ENCODE measurements at regions of chr13 and their contacts with region 1.

Region 1: DNA sequence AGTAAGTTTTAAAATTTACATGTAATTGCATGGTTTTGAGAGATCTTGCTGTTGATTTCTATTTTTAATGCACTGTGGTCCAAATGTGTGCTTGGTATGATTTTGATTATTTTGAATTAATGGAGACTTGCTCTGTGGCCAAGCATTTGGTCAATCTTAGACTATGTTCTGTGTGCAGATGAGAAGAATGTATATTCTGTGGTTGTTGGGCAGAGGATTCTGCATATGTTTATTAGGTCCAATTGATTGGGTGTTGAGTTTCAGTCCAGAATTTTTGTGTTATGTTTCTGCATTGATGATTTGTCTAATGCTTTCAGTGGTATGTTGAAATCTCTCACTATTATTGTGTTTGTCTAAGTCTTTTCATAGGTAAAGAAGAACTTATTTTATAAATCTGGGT is 82.3 kb downstream of the TDRD3 start:
- DNase-seq: no peak
- ATAC-seq: no peak
- H3K4me3 ChIP-seq: no peak overlapping the region
- H3K4me3 Mint-ChIP-seq: no peak overlapping the region
- H3K27ac ChIP-seq: no peak overlapping the region
- H3K27ac Mint-ChIP-seq: no peak overlapping the region
- H3K4me1 ChIP-seq: no peaks in the 10 kb centered on the region
- H3K4me1 Mint-ChIP-seq: peaks cover 0 to 9% (median 0%) of the 10 kb centered on the region in 7 donors
- H3K27me3 ChIP-seq: no peaks in the 10 kb centered on the region
- H3K27me3 Mint-ChIP-seq: no peaks in the 10 kb centered on the region

Region 2: GRCh38 chr13:60417734-60418133 is 61.5 kb before region 1 on chr13:
- CTCF ChIA-PET with region 1: no interaction called
- POLR2A ChIA-PET with region 1: no interaction called
- intact Hi-C with region 1: loop called in 1 of 2 experiments (anchors 10 kb)
- DNase-seq: no peak
- ATAC-seq: no peak
- H3K4me3 ChIP-seq: no peak overlapping the region
- H3K4me3 Mint-ChIP-seq: no peak overlapping the region
- H3K27ac ChIP-seq: no peak overlapping the region
- H3K27ac Mint-ChIP-seq: peak overlapping the region in 1 of 9 donors; percentile 43
- H3K4me1 ChIP-seq: no peaks in the 10 kb centered on the region
- H3K4me1 Mint-ChIP-seq: peaks cover 3 to 45% (median 20%) of the 10 kb centered on the region in 7 donors
- H3K27me3 ChIP-seq: no peaks in the 10 kb centered on the region
- H3K27me3 Mint-ChIP-seq: no peaks in the 10 kb centered on the region

Region 3: DNA sequence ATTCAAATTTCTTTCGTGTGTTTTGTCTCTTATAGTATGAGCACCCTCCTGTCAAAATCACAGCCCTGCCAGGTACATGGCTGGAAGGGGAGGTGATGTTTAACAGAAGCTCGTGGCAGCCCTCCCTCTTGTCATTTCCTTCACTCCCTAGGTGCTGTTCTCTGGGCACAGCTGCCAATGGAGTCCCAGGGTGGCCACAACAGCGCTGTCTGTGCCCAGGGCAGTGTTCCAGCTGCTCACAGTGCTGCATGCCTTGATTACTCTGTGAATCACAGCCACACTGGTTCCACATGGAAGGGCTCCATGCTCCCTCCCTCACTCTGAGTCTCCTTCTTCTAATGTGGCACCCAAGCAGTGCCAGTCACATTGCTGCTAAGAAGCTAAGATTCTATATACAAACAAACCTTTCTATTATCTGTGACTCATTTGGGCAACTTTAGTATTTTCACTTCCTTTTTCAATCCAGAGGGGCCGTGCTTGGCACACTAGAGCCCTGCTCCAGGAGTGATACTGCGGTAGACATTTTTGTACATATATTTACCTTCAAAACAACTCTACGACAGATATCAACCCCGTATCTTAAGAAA is 166.4 kb after region 1 on chr13:
- CTCF ChIA-PET with region 1: no interaction called
- POLR2A ChIA-PET with region 1: no interaction called
- intact Hi-C with region 1: no loop called
- DNase-seq: no peak
- ATAC-seq: no peak
- H3K4me3 ChIP-seq: no peak overlapping the region
- H3K4me3 Mint-ChIP-seq: no peak overlapping the region
- H3K27ac ChIP-seq: no peak overlapping the region
- H3K27ac Mint-ChIP-seq: no peak overlapping the region
- H3K4me1 ChIP-seq: no peaks in the 10 kb centered on the region
- H3K4me1 Mint-ChIP-seq: no peaks in the 10 kb centered on the region
- H3K27me3 ChIP-seq: no peaks in the 10 kb centered on the region
- H3K27me3 Mint-ChIP-seq: peaks cover 0 to 27% (median 3%) of the 10 kb centered on the region in 5 donors

Region 4: DNA sequence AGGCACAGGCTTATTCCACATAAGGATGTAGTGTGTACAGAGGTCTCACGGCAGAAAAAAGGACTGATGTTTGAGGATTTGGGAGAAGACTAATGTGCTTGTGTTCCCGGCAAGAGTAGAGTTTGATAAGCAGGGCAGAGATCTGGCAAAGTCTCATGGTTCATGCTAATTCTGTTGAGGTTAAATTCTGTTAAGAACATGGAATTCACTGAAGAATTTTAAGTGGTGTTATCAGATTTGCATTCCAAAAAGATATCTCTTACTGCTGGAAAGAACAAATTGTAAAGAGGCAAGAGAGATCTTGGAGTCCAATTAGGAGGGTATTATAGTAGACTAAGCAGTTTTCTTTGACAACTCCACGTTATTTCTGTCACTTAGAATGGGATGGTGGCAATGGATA is 266.1 kb after region 1 on chr13:
- CTCF ChIA-PET with region 1: no interaction called
- POLR2A ChIA-PET with region 1: no interaction called
- intact Hi-C with region 1: no loop called
- DNase-seq: no peak
- ATAC-seq: no peak
- H3K4me3 ChIP-seq: no peak overlapping the region
- H3K4me3 Mint-ChIP-seq: no peak overlapping the region
- H3K27ac ChIP-seq: no peak overlapping the region
- H3K27ac Mint-ChIP-seq: no peak overlapping the region
- H3K4me1 ChIP-seq: no peaks in the 10 kb centered on the region
- H3K4me1 Mint-ChIP-seq: no peaks in the 10 kb centered on the region
- H3K27me3 ChIP-seq: no peaks in the 10 kb centered on the region
- H3K27me3 Mint-ChIP-seq: no peaks in the 10 kb centered on the region

Measured in naive thymus-derived CD4-positive, alpha-beta T cell (primary cell).